A549 (cell line): ENCODE measurements at regions of chr17 and their contacts with region 1.

Region 1: GRCh38 chr17:48791128-48792032 is 25.6 kb downstream of the TTLL6 start:
- DNase-seq: peak; percentile 92 to 94
- ATAC-seq: peak; percentile 77 to 89
- H3K4me3 ChIP-seq: no peak overlapping the region
- H3K27ac ChIP-seq: peak overlapping the region; percentile 68
- H3K4me1 ChIP-seq: peaks cover 49% of the 10 kb centered on the region
- CTCF ChIP-seq: peak; percentile 96
- EP300 ChIP-seq: no peak
- POLR2A ChIP-seq: no peak
- RAD21 ChIP-seq: peak; percentile 96 to 98

Region 2: GRCh38 chr17:48738803-48739526 is 52.4 kb before region 1 on chr17:
- CTCF ChIA-PET with region 1: interaction called, 852 read pairs
- POLR2A ChIA-PET with region 1: no interaction called
- DNase-seq: no peak
- ATAC-seq: no peak
- H3K4me3 ChIP-seq: no peak overlapping the region
- H3K27ac ChIP-seq: no peak overlapping the region
- H3K4me1 ChIP-seq: no peaks in the 10 kb centered on the region
- CTCF ChIP-seq: no peak
- EP300 ChIP-seq: no peak
- POLR2A ChIP-seq: no peak
- RAD21 ChIP-seq: no peak

Region 3: GRCh38 chr17:48756830-48757251 is 34.5 kb before region 1 on chr17:
- CTCF ChIA-PET with region 1: interaction called, 144 read pairs
- POLR2A ChIA-PET with region 1: no interaction called
- DNase-seq: no peak
- ATAC-seq: no peak
- H3K4me3 ChIP-seq: no peak overlapping the region
- H3K27ac ChIP-seq: no peak overlapping the region
- H3K4me1 ChIP-seq: peaks cover 40% of the 10 kb centered on the region
- CTCF ChIP-seq: no peak
- EP300 ChIP-seq: no peak
- POLR2A ChIP-seq: no peak
- RAD21 ChIP-seq: no peak

Region 4: DNA sequence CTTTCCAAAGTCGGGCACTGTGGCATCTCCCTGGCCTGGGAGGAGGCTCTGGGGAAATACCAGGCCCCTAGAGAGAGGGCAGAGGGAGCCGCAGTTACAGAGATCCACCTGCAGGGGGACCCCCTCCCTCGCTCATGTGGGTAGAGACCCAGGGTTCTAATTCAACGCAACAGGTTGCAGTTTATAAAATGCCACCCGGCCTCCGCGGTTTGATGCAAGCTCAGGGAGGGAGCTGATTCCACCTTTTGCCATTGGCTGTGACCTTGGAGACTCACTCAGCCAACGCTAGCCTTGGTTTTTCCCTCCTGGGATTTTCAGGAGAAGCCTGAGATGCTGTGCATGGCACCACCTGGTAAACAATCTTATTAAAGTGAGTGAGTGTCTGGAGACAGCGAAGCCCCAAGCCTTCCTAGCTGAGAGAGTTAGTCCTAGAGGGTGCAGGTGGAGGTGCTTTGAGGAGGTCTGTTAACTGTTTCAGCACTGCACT is 13.6 kb after region 1 on chr17:
- CTCF ChIA-PET with region 1: interaction called, 91 read pairs
- POLR2A ChIA-PET with region 1: no interaction called
- DNase-seq: peak; percentile 78 to 96
- ATAC-seq: peak; percentile 95
- H3K4me3 ChIP-seq: no peak overlapping the region
- H3K27ac ChIP-seq: peak overlapping the region; percentile 53 to 73
- H3K4me1 ChIP-seq: peaks cover 56% of the 10 kb centered on the region
- CTCF ChIP-seq: peak; percentile 97
- EP300 ChIP-seq: no peak
- POLR2A ChIP-seq: no peak
- RAD21 ChIP-seq: peak; percentile 99

Region 5: DNA sequence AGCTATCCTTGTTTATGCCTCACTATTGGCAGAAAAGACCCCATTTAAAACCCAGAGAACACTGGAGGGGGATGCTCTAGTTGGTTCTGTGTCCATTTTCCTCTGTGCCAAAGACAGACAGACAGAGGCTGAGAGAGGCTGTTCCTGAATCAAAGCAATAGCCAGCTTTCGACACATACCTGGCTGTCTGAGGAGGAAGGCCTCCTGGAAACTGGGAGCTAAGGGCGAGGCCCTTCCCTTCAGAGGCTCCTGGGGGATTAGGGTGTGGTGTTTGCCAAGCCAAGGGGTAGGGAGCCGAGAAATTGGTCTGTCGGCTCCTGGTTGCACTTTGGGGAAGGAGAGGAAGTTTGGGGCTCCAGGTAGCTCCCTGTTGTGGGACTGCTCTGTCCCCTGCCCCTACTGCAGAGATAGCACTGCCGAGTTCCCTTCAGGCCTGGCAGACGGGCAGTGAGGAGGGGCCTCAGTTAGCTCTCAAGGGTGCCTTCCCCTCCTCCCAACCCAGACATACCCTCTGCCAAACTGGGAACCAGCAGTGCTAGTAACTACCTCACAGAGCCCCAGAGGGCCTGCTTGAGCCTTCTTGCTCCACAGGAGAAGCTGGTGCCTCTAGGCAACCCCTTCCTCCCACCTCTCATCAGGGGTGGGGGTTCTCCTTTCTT is 261.9 kb after region 1 on chr17:
- CTCF ChIA-PET with region 1: no interaction called
- POLR2A ChIA-PET with region 1: no interaction called
- DNase-seq: no peak
- ATAC-seq: peak; percentile 21 to 50; a peak in 4 of 6 replicates
- H3K4me3 ChIP-seq: no peak overlapping the region
- H3K27ac ChIP-seq: peak overlapping the region in 1 of 2 experiments; percentile 25; a peak in 1 of 6 replicates
- H3K4me1 ChIP-seq: no peaks in the 10 kb centered on the region
- CTCF ChIP-seq: no peak
- EP300 ChIP-seq: no peak
- POLR2A ChIP-seq: no peak
- RAD21 ChIP-seq: no peak